CD4-positive, alpha-beta memory T cell (primary cell): ENCODE measurements at regions of chr11 and their contacts with region 1.

Region 1: DNA sequence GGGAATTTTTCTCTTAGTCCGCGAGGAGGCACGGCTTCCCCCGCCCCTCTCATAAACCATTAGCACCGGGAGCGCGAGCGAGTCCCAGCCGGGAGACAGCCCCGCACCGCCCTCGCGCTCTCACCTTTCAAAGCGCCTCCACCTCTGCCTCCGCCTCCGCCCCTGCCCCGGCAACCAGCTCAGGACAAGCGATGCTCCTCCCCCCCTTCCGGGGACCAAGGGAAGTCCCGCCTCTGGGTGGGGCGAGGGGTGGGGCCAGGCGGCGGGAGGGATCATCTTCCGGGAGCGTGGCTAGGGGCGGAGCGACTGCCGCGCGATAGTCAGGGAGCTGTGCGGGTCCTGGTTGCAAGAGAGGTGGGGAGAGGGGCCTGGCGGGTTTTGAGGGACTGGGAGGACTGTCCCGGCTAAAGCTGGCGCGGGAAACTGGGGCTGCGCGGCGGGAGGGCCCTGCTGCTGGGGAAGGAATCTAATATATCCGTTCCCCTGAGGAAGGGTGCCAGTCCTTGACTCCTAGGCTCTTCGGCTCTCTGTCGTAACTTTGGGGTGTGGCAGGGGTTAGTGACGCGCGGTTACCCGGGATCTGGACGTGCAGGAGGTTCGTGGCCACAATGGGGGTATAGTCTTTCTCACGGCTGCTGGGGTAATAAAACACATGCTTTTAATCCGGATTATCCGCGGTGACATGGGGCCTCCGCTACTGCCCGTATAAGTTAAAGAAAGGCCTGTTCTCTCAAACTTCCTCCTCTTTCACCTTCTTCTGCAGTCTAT is at the starts of genes CCDC82 and JRKL:
- DNase-seq: peak; percentile 97 to 99 (median 98)
- H3K4me3 ChIP-seq: peak within 1 kb of the TSS; percentile 85 to 93
- H3K4me3 Mint-ChIP-seq: peak within 1 kb of the TSS; percentile 92 to 98 (median 94)
- H3K27ac ChIP-seq: peak within 1 kb of the TSS; percentile 79
- H3K27ac Mint-ChIP-seq: peak within 1 kb of the TSS; percentile 91 to 98 (median 97)
- H3K4me1 ChIP-seq: peaks cover 36% of the 10 kb centered on the region
- H3K4me1 Mint-ChIP-seq: peaks cover 22 to 59% (median 37%) of the 10 kb centered on the region in 4 donors
- H3K27me3 ChIP-seq: no peaks in the 10 kb centered on the region
- H3K27me3 Mint-ChIP-seq: no peaks in the 10 kb centered on the region
- total RNA-seq, gene CCDC82: 37.9 to 42.8 TPM
- total RNA-seq, gene JRKL: 18.3 to 20.0 TPM

Region 2: GRCh38 chr11:94973099-94973968 is 1416.6 kb before region 1 on chr11 and contains the starts of genes CWC15 and KDM4D:
- CTCF ChIA-PET with region 1: no interaction called
- POLR2A ChIA-PET with region 1: interaction called, 3 read pairs
- intact Hi-C with region 1: loop called (anchors 1 kb)
- DNase-seq: peak; percentile 91 to 96 (median 93)
- H3K4me3 ChIP-seq: peak within 1 kb of the TSS; percentile 61 to 95
- H3K4me3 Mint-ChIP-seq: peak within 1 kb of the TSS; percentile 94 to 100 (median 98)
- H3K27ac ChIP-seq: peak within 1 kb of the TSS; percentile 92
- H3K27ac Mint-ChIP-seq: peak within 1 kb of the TSS; percentile 84 to 100 (median 98)
- H3K4me1 ChIP-seq: peaks cover 16% of the 10 kb centered on the region
- H3K4me1 Mint-ChIP-seq: peaks cover 14 to 35% (median 25%) of the 10 kb centered on the region in 4 donors
- H3K27me3 ChIP-seq: no peaks in the 10 kb centered on the region
- H3K27me3 Mint-ChIP-seq: no peaks in the 10 kb centered on the region
- total RNA-seq, gene CWC15: 62.7 to 69.4 TPM
- total RNA-seq, gene KDM4D: 0.32 to 0.39 TPM

Region 3: GRCh38 chr11:95849087-95849825 is 540.6 kb before region 1 on chr11:
- CTCF ChIA-PET with region 1: interaction called, 34 read pairs
- POLR2A ChIA-PET with region 1: no interaction called
- intact Hi-C with region 1: no loop called
- DNase-seq: peak in 1 of 5 donors; percentile 16
- H3K4me3 ChIP-seq: no peak overlapping the region
- H3K4me3 Mint-ChIP-seq: no peak overlapping the region
- H3K27ac ChIP-seq: no peak overlapping the region
- H3K27ac Mint-ChIP-seq: peak overlapping the region in 1 of 7 donors; percentile 67
- H3K4me1 ChIP-seq: no peaks in the 10 kb centered on the region
- H3K4me1 Mint-ChIP-seq: no peaks in the 10 kb centered on the region
- H3K27me3 ChIP-seq: no peaks in the 10 kb centered on the region
- H3K27me3 Mint-ChIP-seq: no peaks in the 10 kb centered on the region

Region 4: DNA sequence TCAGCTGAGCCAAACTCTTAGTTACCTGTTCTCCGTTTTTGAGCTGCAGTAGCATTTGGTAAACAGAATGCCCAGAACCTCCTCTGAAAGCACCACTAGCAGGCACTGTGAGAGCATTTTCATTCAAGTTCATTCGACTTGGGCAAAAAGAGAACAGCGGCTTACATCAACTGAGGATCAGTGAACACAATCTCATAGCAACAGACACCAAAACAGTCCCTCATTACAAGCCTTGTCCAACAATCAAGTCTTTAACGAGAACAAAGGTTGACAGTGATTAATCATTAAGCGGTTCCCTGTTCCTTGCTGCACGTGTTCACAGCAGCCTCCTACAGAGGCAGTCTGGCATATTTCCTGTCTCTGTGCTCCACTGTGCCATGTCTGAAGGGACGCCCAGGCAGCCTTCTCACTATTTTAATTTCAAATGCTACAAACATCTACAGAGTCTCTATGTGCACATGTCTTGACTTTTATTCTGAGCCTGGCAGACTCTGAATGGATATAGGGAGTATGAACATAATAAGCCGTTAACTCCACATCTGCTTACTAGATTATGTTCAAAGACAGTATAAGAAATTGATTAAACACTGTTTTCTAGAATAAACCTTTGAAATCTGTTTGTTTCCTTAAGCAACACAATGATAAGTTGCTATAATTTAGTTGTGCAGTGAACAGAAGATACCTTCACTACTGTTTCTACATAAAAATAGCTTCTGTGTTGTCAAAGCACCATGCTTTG is 377.6 kb before region 1 on chr11:
- CTCF ChIA-PET with region 1: interaction called, 12 read pairs
- POLR2A ChIA-PET with region 1: interaction called, 18 read pairs
- intact Hi-C with region 1: loop called (anchors 1 kb)
- DNase-seq: peak; percentile 64 to 89 (median 75)
- H3K4me3 ChIP-seq: no peak overlapping the region
- H3K4me3 Mint-ChIP-seq: peak overlapping the region in 7 of 8 donors; percentile 22 to 83 (median 63)
- H3K27ac ChIP-seq: peak overlapping the region; percentile 44
- H3K27ac Mint-ChIP-seq: peak overlapping the region; percentile 64 to 97 (median 93)
- H3K4me1 ChIP-seq: peaks cover 59% of the 10 kb centered on the region
- H3K4me1 Mint-ChIP-seq: peaks cover 9 to 64% (median 52%) of the 10 kb centered on the region in 4 donors
- H3K27me3 ChIP-seq: no peaks in the 10 kb centered on the region
- H3K27me3 Mint-ChIP-seq: no peaks in the 10 kb centered on the region

Region 5: DNA sequence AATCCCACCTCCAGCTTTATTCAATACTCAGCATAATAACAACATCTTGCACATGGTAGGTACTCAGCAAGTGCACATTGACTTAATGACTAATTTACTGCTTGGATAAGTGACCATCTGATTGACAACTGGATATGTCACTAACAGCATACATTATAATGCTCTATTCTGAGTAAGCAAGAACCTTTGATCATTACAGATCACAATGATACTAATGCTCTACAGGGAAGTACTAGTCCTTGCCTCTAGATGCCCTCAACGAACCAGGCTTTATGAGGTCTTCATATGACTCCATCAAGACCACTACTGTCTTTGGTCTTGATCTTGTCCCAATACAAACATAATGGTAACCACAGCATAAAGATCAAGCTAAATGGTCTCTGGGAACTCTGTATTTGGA is 298.4 kb before region 1 on chr11:
- CTCF ChIA-PET with region 1: interaction called, 20 read pairs
- POLR2A ChIA-PET with region 1: interaction called, 8 read pairs
- intact Hi-C with region 1: loop called (anchors 1 kb)
- DNase-seq: peak; percentile 34 to 54 (median 43)
- H3K4me3 ChIP-seq: no peak overlapping the region
- H3K4me3 Mint-ChIP-seq: peak overlapping the region in 4 of 8 donors; percentile 24 to 75 (median 32)
- H3K27ac ChIP-seq: no peak overlapping the region
- H3K27ac Mint-ChIP-seq: peak overlapping the region in 3 of 7 donors; percentile 23 to 43 (median 40)
- H3K4me1 ChIP-seq: peaks cover 32% of the 10 kb centered on the region
- H3K4me1 Mint-ChIP-seq: peaks cover 32 to 79% (median 61%) of the 10 kb centered on the region in 4 donors
- H3K27me3 ChIP-seq: no peaks in the 10 kb centered on the region
- H3K27me3 Mint-ChIP-seq: no peaks in the 10 kb centered on the region